Sigmoid colon (tissue), 7 donors: ENCODE measurements at regions of chr11 and their contacts with region 1.

Region 1: DNA sequence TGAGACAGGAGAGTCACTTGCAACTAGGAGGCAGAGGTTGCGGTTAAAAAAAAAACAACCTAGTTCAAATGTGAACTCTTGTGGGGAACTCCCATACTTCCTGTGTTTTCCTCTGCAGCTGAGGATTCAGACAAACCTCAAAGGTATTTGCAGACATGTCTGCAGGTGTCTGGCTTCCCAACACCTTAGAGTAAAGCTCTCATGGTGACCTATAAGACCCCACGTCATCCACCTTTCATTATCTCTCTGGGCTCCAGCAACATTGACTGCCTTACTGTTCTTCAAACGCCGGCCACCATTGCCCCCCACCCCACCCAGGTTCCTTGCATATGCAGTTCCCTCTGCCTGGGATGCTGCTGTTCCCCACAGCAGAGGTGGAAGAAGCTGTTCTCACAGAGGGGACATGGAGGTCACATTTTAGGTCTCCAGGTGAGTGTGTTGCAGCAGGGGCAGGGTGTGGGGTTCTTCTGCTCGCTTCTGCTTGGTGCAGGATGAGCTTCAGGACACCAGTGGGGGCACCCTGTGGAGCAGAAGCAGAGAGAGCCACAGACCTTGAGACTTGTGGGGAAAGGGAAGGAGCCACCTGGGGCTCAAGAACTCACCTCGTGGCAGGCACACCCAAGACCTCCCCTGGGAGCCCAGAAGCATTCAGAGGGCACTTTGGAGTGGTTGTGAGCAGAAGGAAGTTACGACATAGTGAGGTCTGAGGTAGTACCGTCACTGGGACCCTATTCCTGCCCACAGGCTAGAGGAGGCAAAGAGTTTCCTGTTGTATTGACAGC is 203.2 kb downstream of the CSNK2A3 start:
- DNase-seq: no peak
- H3K4me3 ChIP-seq: no peak overlapping the region
- H3K27ac ChIP-seq: no peak overlapping the region
- H3K4me1 ChIP-seq: peaks cover 0 to 28% (median 18%) of the 10 kb centered on the region in 4 donors
- H3K27me3 ChIP-seq: no peaks in the 10 kb centered on the region
- CTCF ChIP-seq: no peak
- EP300 ChIP-seq: no peak
- POLR2A ChIP-seq: no peak

Region 2: DNA sequence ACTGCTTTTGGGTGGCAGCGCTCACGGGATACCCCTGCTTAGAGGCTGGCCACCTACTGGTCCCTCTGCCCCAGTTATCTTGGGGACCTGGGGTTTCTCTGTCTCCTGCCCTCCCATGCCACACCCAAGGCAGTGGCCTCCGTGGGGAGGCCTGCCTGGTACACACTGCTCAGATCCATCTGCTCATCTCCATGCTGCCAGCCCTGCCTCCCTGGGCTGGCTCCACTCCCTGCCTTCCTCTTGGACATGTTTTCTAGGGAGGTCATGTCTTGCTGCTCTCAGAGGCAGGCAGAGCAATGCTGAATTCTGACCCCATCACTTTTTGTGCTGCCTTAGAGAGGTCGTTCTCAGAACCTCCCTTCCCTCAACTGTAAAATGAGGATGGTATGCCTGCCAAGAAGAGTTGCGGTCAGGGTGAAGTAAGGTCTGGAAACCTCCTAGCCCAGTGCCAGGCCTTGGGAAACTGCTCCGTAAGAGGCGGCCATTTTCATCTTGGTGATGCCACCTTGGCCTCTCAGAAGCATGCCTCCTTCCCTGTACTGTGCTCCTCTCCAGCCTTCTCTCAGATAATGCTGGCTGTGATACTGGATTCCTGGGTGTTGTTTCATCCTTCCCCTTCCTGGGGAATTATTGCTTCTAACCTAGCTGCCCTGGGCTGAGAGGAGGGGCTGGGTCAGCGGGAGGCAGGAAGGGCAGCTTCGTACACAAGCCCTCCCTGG is 105.6 kb before region 1 on chr11:
- intact Hi-C with region 1: loop called (anchors 5 kb)
- DNase-seq: no peak
- H3K4me3 ChIP-seq: no peak overlapping the region
- H3K27ac ChIP-seq: peak overlapping the region in 3 of 4 donors; percentile 18 to 21 (median 20)
- H3K4me1 ChIP-seq: peaks cover 0 to 38% (median 33%) of the 10 kb centered on the region in 4 donors
- H3K27me3 ChIP-seq: no peaks in the 10 kb centered on the region
- CTCF ChIP-seq: no peak
- EP300 ChIP-seq: no peak
- POLR2A ChIP-seq: no peak

Region 3: DNA sequence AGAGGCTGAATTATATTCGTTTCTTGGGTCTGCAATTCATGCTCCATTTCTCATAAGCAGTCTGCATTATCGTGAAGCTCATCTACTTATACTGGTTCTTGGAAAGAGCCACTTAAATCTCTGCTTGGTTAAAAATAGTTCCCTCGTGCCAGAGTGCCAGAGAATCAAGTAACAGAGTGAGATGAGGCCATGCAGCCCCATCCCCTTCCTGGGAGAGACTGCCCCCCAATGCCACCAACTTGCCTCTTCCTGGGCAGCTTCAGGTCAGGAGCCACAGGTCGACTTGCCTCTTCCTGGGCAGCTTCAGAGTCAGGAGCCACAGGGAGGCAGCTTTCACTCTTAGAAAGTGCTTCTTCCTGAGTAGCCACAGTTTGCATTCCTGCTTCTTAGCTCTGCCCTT is 68.1 kb before region 1 on chr11:
- intact Hi-C with region 1: no loop called
- DNase-seq: no peak
- H3K4me3 ChIP-seq: no peak overlapping the region
- H3K27ac ChIP-seq: peak overlapping the region; percentile 56 to 67 (median 64)
- H3K4me1 ChIP-seq: peaks cover 0 to 38% (median 32%) of the 10 kb centered on the region in 4 donors
- H3K27me3 ChIP-seq: no peaks in the 10 kb centered on the region
- CTCF ChIP-seq: no peak
- EP300 ChIP-seq: no peak
- POLR2A ChIP-seq: no peak

Region 4: DNA sequence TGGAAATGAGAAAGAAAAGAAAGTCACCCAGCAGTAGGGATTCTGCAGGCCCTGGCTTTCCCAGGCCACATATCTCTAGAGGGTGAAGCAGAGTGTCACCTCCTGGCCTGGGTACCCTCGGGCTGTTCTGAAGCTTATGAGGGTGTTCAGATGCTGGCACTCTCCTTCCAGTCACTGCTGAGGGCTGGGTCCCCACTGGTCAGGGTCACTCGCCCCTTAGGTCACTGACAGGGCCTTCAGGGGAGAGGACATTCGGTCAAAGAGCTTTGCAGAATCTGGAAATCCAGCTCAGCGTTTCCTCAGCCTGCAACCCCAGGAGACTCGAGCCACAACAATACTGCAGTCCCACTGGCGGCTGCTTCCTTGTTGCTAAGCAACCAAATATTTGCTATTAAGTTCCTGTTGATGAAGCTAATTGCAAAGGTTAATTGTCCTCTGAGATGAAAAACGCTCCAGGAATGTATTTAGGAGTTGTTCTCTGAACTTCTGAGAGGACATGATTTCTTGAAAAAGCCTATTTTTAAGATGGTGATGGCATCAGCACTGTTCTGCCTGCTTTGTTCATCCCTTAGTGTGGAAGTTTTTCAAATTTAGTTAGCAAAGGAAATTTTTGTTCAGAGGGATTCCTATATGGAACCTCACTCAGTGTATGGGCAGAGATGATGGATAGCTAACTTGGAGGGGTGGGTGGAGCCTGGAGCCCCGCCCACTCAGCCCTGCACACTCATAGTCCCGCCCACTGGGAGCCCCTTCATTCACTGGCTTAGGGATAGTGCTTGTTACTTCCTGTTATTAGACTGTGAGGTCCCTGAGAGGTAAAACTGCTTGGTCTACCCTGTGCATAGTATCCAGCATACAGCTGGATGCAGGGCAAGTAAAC is 94.0 kb after region 1 on chr11:
- intact Hi-C with region 1: no loop called
- DNase-seq: no peak
- H3K4me3 ChIP-seq: no peak overlapping the region
- H3K27ac ChIP-seq: peak overlapping the region; percentile 33 to 88 (median 74)
- H3K4me1 ChIP-seq: peaks cover 0 to 43% (median 28%) of the 10 kb centered on the region in 4 donors
- H3K27me3 ChIP-seq: no peaks in the 10 kb centered on the region
- CTCF ChIP-seq: no peak
- EP300 ChIP-seq: peak in 1 of 4 donors; percentile 9
- POLR2A ChIP-seq: no peak